ENCODE measurements at regions of chrX and their contacts with region 1.

Region 1: GRCh38 chrX:44542567-44543325 is at the start of gene FUNDC1:
- DNase-seq: peak; percentile 77 to 97 (median 89)
- ATAC-seq: peak; percentile 97
- H3K4me3 ChIP-seq: peak within 1 kb of the TSS; percentile 69 to 93
- H3K4me3 Mint-ChIP-seq: peak within 1 kb of the TSS; percentile 94
- H3K27ac ChIP-seq: peak within 1 kb of the TSS; percentile 65 to 68
- H3K27ac Mint-ChIP-seq: peak within 1 kb of the TSS; percentile 96
- H3K4me1 ChIP-seq: peaks cover 13% of the 10 kb centered on the region
- H3K4me1 Mint-ChIP-seq: peaks cover 38% of the 10 kb centered on the region
- H3K27me3 ChIP-seq: no peaks in the 10 kb centered on the region
- H3K27me3 Mint-ChIP-seq: no peaks in the 10 kb centered on the region
- CTCF ChIP-seq: peak; percentile 20
- total RNA-seq, gene FUNDC1: 4.6 to 6.2 TPM

Region 2: GRCh38 chrX:43654431-43655150 is 888.2 kb before region 1 on chrX:
- CTCF ChIA-PET with region 1: no interaction called
- POLR2A ChIA-PET with region 1: no interaction called
- intact Hi-C with region 1: loop called (anchors 5 to 10 kb)
- DNase-seq: peak; percentile 70 to 93 (median 84)
- ATAC-seq: peak; percentile 88
- H3K4me3 ChIP-seq: peak overlapping the region; percentile 66 to 72
- H3K4me3 Mint-ChIP-seq: peak overlapping the region; percentile 90
- H3K27ac ChIP-seq: peak overlapping the region; percentile 88 to 89
- H3K27ac Mint-ChIP-seq: peak overlapping the region; percentile 98
- H3K4me1 ChIP-seq: peaks cover 3% of the 10 kb centered on the region
- H3K4me1 Mint-ChIP-seq: peaks cover 10% of the 10 kb centered on the region
- H3K27me3 ChIP-seq: no peaks in the 10 kb centered on the region
- H3K27me3 Mint-ChIP-seq: no peaks in the 10 kb centered on the region
- CTCF ChIP-seq: no peak

Region 3: GRCh38 chrX:43958529-43958928 is 584.2 kb before region 1 on chrX:
- CTCF ChIA-PET with region 1: interaction called, 3 read pairs
- POLR2A ChIA-PET with region 1: no interaction called
- intact Hi-C with region 1: loop called (anchors 1 to 2 kb)
- DNase-seq: peak in 4 of 9 experiments; percentile 0 to 76 (median 39)
- ATAC-seq: peak; percentile 55
- H3K4me3 ChIP-seq: no peak overlapping the region
- H3K4me3 Mint-ChIP-seq: no peak overlapping the region
- H3K27ac ChIP-seq: no peak overlapping the region
- H3K27ac Mint-ChIP-seq: no peak overlapping the region
- H3K4me1 ChIP-seq: no peaks in the 10 kb centered on the region
- H3K4me1 Mint-ChIP-seq: no peaks in the 10 kb centered on the region
- H3K27me3 ChIP-seq: no peaks in the 10 kb centered on the region
- H3K27me3 Mint-ChIP-seq: peaks cover 3% of the 10 kb centered on the region
- CTCF ChIP-seq: peak; percentile 69

Region 4: DNA sequence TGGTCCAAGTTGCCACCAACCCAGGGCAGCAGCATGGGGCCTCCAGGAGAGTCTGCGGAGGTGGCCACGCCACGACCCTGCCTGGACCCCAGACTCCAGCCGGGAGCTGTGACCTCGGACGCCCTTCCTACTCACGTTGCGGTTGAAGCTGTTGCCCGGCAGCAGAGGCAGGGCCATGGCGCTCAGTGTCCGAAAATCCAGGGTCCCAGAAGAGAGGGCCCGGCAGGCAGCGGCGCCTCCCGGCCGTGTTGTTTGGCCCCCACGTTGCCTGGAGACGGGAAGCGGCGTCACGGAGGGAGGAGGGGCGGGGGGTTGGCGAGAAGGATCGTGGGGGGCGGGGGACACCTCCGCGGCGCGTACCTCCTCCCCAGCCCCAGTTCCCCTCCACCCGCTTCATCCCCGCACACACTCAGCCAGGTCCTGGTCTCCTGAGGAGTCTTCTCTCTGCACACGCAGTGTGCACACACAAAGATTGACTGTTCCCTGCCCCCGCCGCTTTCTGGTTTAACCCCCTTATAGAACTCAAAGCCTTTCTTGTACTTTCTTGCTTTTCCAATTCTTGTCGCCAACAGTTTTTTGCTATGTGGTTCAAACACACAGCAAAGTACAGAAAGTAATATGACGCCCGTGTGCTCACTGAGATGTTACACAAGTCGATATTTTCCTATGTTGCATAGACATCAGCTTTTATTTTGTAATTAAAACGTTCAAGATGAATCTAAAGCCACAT is 199.2 kb before region 1 on chrX and contains the start of gene EFHC2:
- CTCF ChIA-PET with region 1: no interaction called
- POLR2A ChIA-PET with region 1: no interaction called
- intact Hi-C with region 1: loop called (anchors 10 kb)
- DNase-seq: peak; percentile 26 to 82 (median 57)
- ATAC-seq: peak; percentile 55
- H3K4me3 ChIP-seq: peak within 1 kb of the TSS; percentile 51 to 65
- H3K4me3 Mint-ChIP-seq: peak within 1 kb of the TSS; percentile 93
- H3K27ac ChIP-seq: peak within 1 kb of the TSS; percentile 84 to 90
- H3K27ac Mint-ChIP-seq: peak within 1 kb of the TSS; percentile 95
- H3K4me1 ChIP-seq: peaks cover 14% of the 10 kb centered on the region
- H3K4me1 Mint-ChIP-seq: peaks cover 27% of the 10 kb centered on the region
- H3K27me3 ChIP-seq: no peaks in the 10 kb centered on the region
- H3K27me3 Mint-ChIP-seq: no peaks in the 10 kb centered on the region
- CTCF ChIP-seq: no peak
- total RNA-seq, gene EFHC2: 1.3 to 1.8 TPM

Region 5: DNA sequence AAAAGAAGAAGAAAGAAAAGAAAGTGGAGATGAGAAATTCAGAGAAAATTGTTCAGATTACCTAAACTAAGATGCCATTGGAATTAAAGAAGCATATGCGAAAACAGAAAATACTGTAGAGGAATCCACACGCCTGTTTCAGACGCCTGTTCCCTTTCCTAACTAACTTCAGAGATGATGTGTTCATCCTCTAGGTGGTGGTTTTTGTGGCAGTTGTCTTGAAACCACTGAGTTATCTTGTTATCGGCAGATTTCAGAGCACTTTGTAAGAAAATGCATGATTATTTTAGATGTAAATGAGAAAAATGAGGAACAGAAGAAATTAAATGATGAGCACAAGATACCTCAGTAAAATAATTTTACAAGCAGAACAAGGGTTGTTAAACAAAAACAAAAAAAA is 48.4 kb before region 1 on chrX:
- CTCF ChIA-PET with region 1: no interaction called
- POLR2A ChIA-PET with region 1: no interaction called
- intact Hi-C with region 1: no loop called
- DNase-seq: no peak
- ATAC-seq: no peak
- H3K4me3 ChIP-seq: no peak overlapping the region
- H3K4me3 Mint-ChIP-seq: no peak overlapping the region
- H3K27ac ChIP-seq: no peak overlapping the region
- H3K27ac Mint-ChIP-seq: no peak overlapping the region
- H3K4me1 ChIP-seq: no peaks in the 10 kb centered on the region
- H3K4me1 Mint-ChIP-seq: peaks cover 4% of the 10 kb centered on the region
- H3K27me3 ChIP-seq: no peaks in the 10 kb centered on the region
- H3K27me3 Mint-ChIP-seq: no peaks in the 10 kb centered on the region
- CTCF ChIP-seq: no peak

Region 6: DNA sequence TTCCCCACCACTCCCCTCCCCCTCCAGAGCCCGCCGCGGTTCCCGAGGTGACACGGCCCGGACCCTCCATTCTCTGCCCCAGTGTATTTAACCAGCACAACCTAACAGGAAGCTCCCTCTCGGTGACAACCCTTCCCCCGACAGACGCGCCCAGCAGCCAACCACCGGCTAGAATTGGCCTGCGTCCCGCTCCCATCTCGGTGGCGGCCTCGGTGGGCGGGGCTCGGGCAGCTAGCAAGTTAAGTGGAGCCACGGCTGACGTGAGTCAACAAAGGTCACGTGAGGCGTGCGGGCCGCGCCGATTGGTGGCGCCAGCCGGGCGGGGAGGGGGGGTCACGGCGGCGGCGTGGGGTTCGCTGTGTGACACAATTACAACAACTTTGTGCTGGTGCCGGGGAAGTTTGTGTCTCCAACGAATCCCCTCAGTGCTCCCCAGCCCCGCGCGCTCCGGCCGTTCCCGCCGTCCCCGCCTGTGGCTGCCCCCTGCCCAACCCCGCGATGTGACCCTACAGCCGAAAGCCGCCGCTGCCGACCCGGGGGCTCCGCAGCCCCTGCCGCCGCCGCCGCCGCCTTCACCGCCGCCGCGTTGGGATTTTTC is 330.2 kb after region 1 on chrX and contains the start of gene KDM6A:
- CTCF ChIA-PET with region 1: no interaction called
- POLR2A ChIA-PET with region 1: interaction called, 3 read pairs
- intact Hi-C with region 1: loop called in 1 of 2 experiments (anchors 5 kb)
- DNase-seq: peak; percentile 89 to 100 (median 96)
- ATAC-seq: peak; percentile 90
- H3K4me3 ChIP-seq: peak within 1 kb of the TSS; percentile 73 to 79
- H3K4me3 Mint-ChIP-seq: peak within 1 kb of the TSS; percentile 96
- H3K27ac ChIP-seq: peak within 1 kb of the TSS; percentile 84 to 96
- H3K27ac Mint-ChIP-seq: peak within 1 kb of the TSS; percentile 97
- H3K4me1 ChIP-seq: peaks cover 20% of the 10 kb centered on the region
- H3K4me1 Mint-ChIP-seq: peaks cover 21% of the 10 kb centered on the region
- H3K27me3 ChIP-seq: no peaks in the 10 kb centered on the region
- H3K27me3 Mint-ChIP-seq: no peaks in the 10 kb centered on the region
- CTCF ChIP-seq: no peak
- total RNA-seq, gene KDM6A: 61.5 to 63.5 TPM

Region 7: GRCh38 chrX:45070116-45071007 is 527.6 kb after region 1 on chrX:
- CTCF ChIA-PET with region 1: no interaction called
- POLR2A ChIA-PET with region 1: no interaction called
- intact Hi-C with region 1: loop called in 1 of 2 experiments (anchors 10 kb)
- DNase-seq: peak in 2 of 9 experiments; percentile 50 to 65
- ATAC-seq: peak; percentile 58
- H3K4me3 ChIP-seq: no peak overlapping the region
- H3K4me3 Mint-ChIP-seq: no peak overlapping the region
- H3K27ac ChIP-seq: peak overlapping the region in 1 of 2 experiments; percentile 55
- H3K27ac Mint-ChIP-seq: peak overlapping the region; percentile 18
- H3K4me1 ChIP-seq: peaks cover 17% of the 10 kb centered on the region
- H3K4me1 Mint-ChIP-seq: peaks cover 53% of the 10 kb centered on the region
- H3K27me3 ChIP-seq: no peaks in the 10 kb centered on the region
- H3K27me3 Mint-ChIP-seq: no peaks in the 10 kb centered on the region
- CTCF ChIP-seq: peak; percentile 58

Region 8: DNA sequence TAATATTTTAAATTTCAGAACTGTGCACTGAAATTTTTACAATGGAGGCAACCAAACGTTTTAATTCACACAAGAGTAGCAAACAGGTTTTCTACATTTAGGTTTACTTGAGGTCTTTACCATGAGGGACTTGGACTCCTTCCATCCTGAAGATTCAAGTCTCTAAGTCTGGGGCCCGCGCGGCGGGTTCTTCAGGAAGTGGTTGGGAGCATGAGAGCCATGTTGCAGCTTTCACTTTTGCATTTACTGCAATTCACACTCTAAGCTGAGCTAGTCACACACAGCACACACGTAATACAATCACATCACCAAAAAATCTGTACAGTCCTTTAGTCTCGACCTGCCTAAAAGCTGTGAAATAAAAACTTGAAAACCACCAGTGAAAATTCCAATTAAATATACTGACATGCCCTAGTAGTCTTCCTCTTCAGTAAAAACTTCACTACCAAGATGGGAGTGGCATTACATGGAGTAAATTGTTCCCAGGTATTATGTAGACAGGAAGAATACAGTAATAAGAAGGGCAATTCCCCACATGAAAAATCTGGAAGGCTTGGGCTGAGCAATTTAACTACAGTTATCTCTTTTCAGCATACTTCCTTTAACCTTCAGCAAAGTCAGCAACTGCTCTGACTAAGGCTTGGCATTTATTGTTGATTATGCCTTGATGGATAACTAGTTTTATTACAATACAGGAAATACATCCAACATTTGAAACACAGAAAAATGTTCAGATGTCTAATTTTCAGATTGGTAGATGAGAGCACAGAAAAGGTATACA is 1229.0 kb after region 1 on chrX:
- CTCF ChIA-PET with region 1: no interaction called
- POLR2A ChIA-PET with region 1: no interaction called
- intact Hi-C with region 1: no loop called
- DNase-seq: peak in 8 of 9 experiments; percentile 26 to 86 (median 61)
- ATAC-seq: peak; percentile 84
- H3K4me3 ChIP-seq: peak overlapping the region; percentile 23 to 51
- H3K4me3 Mint-ChIP-seq: peak overlapping the region; percentile 78
- H3K27ac ChIP-seq: peak overlapping the region; percentile 57 to 81
- H3K27ac Mint-ChIP-seq: peak overlapping the region; percentile 97
- H3K4me1 ChIP-seq: peaks cover 17% of the 10 kb centered on the region
- H3K4me1 Mint-ChIP-seq: peaks cover 54% of the 10 kb centered on the region
- H3K27me3 ChIP-seq: no peaks in the 10 kb centered on the region
- H3K27me3 Mint-ChIP-seq: no peaks in the 10 kb centered on the region
- CTCF ChIP-seq: no peak

Measured in CD8-positive, alpha-beta T cell (primary cell).